Dorsolateral prefrontal cortex (tissue), 120 donors: ENCODE measurements at regions of chr3 and their contacts with region 1.

Region 1: GRCh38 chr3:47164007-47164881 is at the start of gene SETD2:
- DNase-seq: peak; percentile 85 to 96 (median 92)
- H3K4me3 ChIP-seq: peak within 1 kb of the TSS; percentile 60 to 98 (median 90)
- H3K27ac ChIP-seq: peak within 1 kb of the TSS; percentile 79 to 98 (median 95)
- H3K27me3 ChIP-seq: no peaks in the 10 kb centered on the region
- CTCF ChIP-seq: peak in 45 of 56 donors; percentile 2 to 66 (median 30)
- total RNA-seq, gene SETD2: 44.4 to 82.4 (median 57.4) TPM

Region 2: DNA sequence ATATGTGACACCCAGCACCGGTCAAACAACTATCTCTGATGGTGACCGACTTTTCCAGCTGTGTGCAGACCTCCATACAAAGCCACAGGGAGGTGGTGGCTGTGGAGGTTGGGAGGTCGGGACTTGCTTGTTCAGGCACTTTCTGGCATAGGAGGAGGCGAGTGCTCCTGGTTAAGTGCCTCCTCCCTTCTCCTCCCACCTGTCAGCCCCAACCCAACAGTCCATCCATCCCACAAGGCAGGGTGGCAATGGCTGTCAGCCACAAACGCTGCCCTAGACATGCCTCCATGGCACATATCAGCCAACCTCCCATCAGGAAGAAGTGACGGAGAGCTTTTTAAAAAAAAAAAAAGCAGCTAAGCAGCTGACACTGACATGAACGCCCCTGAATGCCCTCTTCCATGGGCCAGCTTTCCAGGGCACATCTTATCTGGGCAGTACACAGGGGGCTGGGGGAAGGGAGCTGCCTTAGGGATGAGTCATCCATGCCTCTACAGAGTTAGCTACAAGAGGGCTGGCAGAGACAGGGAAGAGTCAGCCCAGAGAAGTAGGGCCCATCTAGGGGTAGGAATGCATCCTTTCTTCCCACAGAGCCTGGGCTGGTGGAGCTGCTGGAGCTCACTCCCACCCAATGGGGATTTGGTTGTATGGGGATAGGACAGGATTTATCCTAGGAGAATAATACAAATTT is 228.9 kb before region 1 on chr3:
- intact Hi-C with region 1: loop called in 1 of 2 experiments (anchors 10 kb)
- DNase-seq: peak in 5 of 10 donors; percentile 42 to 76 (median 55)
- H3K4me3 ChIP-seq: no peak overlapping the region
- H3K27ac ChIP-seq: peak overlapping the region in 37 of 59 donors; percentile 4 to 77 (median 44)
- H3K27me3 ChIP-seq: no peaks in the 10 kb centered on the region
- CTCF ChIP-seq: peak in 5 of 56 donors; percentile 6 to 35 (median 20)

Region 3: GRCh38 chr3:47009225-47010110 is 154.8 kb before region 1 on chr3:
- intact Hi-C with region 1: loop called (anchors 10 kb)
- DNase-seq: peak; percentile 78 to 95 (median 87)
- H3K4me3 ChIP-seq: peak overlapping the region; percentile 41 to 98 (median 80)
- H3K27ac ChIP-seq: peak overlapping the region in 57 of 59 donors; percentile 14 to 90 (median 83)
- H3K27me3 ChIP-seq: no peaks in the 10 kb centered on the region
- CTCF ChIP-seq: peak in 22 of 56 donors; percentile 5 to 43 (median 25)

Region 4: DNA sequence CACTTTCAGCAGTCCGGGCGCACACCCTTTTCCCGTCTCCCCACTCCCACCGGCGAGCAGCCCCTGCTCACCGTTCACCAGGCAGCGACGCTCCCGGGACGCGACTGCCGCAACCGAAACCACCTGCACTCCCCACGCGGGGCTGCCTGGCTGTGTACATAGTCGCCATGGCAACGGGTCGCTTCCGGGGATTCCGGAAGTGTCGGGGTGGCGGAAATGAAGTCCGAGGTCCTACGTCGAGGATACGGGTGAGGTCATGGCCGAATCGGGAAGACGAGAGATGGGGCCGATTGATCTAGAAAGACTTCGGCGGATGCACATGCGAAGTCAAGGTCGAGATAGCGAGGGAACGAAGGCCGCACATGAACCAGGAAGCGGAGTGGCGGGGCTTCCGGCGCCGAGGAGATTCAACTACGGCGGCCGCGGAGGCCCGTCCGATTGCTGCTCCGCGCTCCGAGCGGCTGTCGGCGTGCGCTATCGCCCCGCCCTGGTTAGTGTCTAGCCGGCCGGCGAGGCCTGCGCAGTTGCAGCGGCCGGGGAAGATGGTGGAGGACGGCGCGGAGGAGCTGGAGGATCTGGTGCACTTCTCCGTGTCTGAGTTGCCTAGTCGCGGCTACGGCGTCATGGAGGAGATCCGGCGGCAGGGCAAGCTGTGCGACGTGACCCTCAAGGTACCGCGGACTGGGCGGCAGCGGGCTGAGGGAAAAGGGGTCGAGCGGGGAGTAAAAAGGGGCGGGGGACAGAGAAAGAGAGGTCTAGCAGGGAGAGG is 118.4 kb after region 1 on chr3 and contains the starts of genes KIF9 and KLHL18:
- intact Hi-C with region 1: loop called (anchors 2 to 5 kb)
- DNase-seq: peak; percentile 89 to 95 (median 94)
- H3K4me3 ChIP-seq: peak within 1 kb of the TSS; percentile 68 to 99 (median 87)
- H3K27ac ChIP-seq: peak within 1 kb of the TSS; percentile 63 to 99 (median 94)
- H3K27me3 ChIP-seq: no peaks in the 10 kb centered on the region
- CTCF ChIP-seq: peak in 46 of 56 donors; percentile 14 to 70 (median 39)
- total RNA-seq, gene KIF9: 3.1 to 15.9 (median 8.8) TPM
- total RNA-seq, gene KLHL18: 19.8 to 62.3 (median 38.0) TPM